ENCODE measurements at regions of chr4 and their contacts with region 1.

Region 1: GRCh38 chr4:139453371-139454110 is 380 bp upstream of the RAB33B start:
- DNase-seq: peak; percentile 99
- ATAC-seq: peak; percentile 89
- H3K4me3 Mint-ChIP-seq: peak overlapping the region; percentile 91
- H3K27ac Mint-ChIP-seq: peak overlapping the region; percentile 98
- H3K4me1 Mint-ChIP-seq: peaks cover 50% of the 10 kb centered on the region
- H3K27me3 Mint-ChIP-seq: no peaks in the 10 kb centered on the region
- CTCF ChIP-seq: peak; percentile 26

Region 2: GRCh38 chr4:139083956-139084803 is 369.4 kb before region 1 on chr4:
- CTCF ChIA-PET with region 1: no interaction called
- POLR2A ChIA-PET with region 1: no interaction called
- intact Hi-C with region 1: loop called (anchors 10 kb)
- DNase-seq: peak; percentile 88
- ATAC-seq: peak; percentile 49
- H3K4me3 Mint-ChIP-seq: peak overlapping the region; percentile 100
- H3K27ac Mint-ChIP-seq: peak overlapping the region; percentile 100
- H3K4me1 Mint-ChIP-seq: peaks cover 25% of the 10 kb centered on the region
- H3K27me3 Mint-ChIP-seq: no peaks in the 10 kb centered on the region
- CTCF ChIP-seq: no peak

Region 3: DNA sequence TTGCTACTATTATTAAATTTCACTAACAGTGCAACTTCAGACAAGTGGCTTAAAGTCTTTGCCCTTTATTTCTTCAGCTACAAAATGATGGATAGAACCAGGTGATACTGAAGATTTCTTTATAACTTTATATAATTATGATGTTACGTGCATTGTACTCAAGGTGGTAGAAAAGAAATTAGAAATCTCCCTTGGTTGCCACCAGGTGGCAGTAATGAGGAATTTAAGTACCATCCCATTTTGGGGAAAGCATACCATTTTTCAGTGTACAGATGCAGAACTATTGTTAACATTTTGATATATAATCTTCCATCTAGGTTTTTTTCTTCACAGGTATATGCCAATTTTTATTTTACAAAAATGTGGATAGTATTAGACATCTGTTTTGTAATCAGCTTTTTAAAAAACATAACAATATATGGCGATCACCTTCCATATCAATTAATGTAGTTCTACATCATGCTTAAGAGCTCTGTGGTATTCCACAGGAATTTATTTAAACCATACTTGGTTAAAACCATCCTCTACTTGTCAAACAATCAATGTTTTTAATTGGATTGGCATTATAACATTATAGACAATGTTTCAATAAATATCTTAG is 37.4 kb before region 1 on chr4:
- CTCF ChIA-PET with region 1: interaction called, 10 read pairs
- POLR2A ChIA-PET with region 1: no interaction called
- intact Hi-C with region 1: no loop called
- DNase-seq: peak; percentile 24
- ATAC-seq: no peak
- H3K4me3 Mint-ChIP-seq: no peak overlapping the region
- H3K27ac Mint-ChIP-seq: no peak overlapping the region
- H3K4me1 Mint-ChIP-seq: peaks cover 12% of the 10 kb centered on the region
- H3K27me3 Mint-ChIP-seq: no peaks in the 10 kb centered on the region
- CTCF ChIP-seq: peak; percentile 83

Region 4: DNA sequence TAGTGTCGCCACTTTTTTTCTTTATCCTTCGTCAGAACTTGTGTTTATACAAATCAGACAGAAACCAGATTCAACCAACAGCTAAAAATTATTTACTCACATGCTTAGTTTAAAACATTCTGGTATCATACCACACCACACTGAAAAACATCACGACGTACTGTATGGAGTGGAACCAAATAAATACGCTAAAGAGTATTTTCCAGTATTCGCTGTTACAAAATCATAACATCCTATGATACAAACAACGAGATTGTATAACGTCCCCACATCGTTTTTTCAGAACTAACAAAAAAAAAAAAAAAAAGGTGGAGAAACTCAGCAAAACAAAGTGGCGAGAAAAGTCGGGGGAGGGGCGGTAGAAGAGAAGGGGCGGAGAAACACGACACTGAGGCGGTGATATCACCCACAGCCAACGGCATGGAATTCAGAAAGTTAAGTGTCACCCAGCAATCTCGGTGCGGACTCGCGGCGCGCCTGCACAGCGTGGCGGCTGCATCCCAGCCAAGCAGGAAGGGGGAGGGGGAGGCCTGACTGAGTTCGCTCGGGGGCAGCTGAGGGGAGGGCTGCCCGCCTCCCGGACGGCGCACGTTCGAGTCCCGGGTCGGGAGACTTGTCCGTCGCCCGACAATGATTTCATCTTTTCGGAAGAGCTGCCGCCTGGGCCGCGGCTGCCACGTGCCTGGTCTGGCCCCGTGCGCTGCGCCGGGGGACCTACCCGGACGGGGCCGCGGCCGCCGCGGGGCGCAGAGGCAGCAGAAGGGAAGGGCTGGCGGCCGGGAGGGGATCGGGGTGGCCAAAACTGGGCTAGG is 101.6 kb after region 1 on chr4:
- CTCF ChIA-PET with region 1: interaction called, 3 read pairs
- POLR2A ChIA-PET with region 1: interaction called, 14 read pairs
- intact Hi-C with region 1: no loop called
- DNase-seq: peak; percentile 88
- ATAC-seq: peak; percentile 68
- H3K4me3 Mint-ChIP-seq: peak overlapping the region; percentile 91
- H3K27ac Mint-ChIP-seq: peak overlapping the region; percentile 94
- H3K4me1 Mint-ChIP-seq: peaks cover 41% of the 10 kb centered on the region
- H3K27me3 Mint-ChIP-seq: peaks cover 11% of the 10 kb centered on the region
- CTCF ChIP-seq: no peak

Region 5: DNA sequence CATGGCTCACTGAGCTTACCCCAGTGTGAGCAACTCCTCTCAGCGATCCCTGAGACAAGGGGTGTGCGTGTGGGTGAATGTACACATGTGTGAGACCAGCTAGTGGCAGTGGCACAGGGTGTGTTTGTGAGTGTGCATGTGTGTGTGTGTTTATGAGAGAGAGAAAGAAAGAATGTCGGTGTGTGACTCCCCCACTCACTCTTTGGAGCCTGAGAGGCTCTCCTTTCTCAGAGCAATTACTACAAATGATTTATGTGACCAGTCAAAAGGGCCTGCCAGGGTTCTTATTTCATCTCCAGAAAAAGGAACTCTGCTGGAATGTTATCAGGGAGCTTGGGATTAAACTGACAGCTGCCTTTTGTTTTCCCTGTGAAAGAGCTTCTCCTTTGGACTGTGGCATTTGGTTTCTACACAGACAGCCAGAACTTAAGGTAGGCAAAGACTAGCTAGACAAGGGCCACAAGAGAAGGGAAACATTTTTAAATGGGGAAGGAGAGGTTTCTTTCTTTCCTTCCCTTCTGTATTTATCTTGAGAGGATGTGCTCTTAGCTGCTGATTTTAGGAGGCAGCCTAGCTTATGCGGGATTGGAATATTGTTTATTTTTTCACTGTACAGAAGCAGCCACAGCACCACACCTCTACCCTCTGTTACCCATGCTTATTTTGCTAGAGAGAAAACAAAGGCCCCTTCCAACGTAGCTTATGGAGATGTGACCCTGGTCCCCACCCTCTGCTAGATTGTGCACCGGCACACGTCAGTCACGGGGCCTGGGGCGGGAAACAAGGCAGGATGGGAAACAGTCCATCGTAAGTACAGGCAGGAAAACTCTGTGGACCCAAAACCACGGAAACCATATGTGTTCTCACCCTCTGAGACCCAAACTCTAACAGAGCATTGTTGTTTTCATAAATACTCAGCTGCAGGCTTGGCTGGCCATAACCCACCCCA is 355.5 kb after region 1 on chr4:
- CTCF ChIA-PET with region 1: no interaction called
- POLR2A ChIA-PET with region 1: no interaction called
- intact Hi-C with region 1: no loop called
- DNase-seq: no peak
- ATAC-seq: no peak
- H3K4me3 Mint-ChIP-seq: no peak overlapping the region
- H3K27ac Mint-ChIP-seq: no peak overlapping the region
- H3K4me1 Mint-ChIP-seq: no peaks in the 10 kb centered on the region
- H3K27me3 Mint-ChIP-seq: no peaks in the 10 kb centered on the region
- CTCF ChIP-seq: no peak